Activated naive CD4-positive, alpha-beta T cell treated with anti-CD3 and anti-CD28 coated beads, Interleukin-2, amount 10 ng/mL, durations not matched to agents 7 days and 5 days (primary cell): ENCODE measurements at regions of chr2 and their contacts with region 1.

Region 1: DNA sequence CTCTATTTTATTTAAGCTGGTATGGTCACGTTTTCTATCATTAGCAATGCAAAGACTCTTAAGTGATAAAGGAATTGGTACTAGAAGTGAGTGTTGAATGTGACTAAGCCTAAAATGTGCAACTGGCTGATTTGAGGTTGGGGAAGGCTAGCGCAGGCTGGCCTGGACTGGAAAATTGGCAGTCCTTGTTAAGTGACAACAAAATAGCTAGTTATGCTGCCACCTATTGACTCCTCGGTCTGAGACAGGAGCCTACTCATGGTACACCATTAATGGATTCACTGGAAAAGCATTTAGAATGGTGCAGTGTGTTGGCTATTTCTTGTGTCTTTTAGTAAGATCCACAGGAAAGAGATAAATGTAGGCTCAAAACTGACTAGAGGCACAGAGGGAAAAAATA is 5.7 kb upstream of the WIPF1 start:
- DNase-seq: peak; percentile 68
- H3K4me3 Mint-ChIP-seq: no peak overlapping the region
- H3K27ac Mint-ChIP-seq: peak overlapping the region; percentile 65
- H3K4me1 Mint-ChIP-seq: peaks cover 90% of the 10 kb centered on the region
- H3K27me3 Mint-ChIP-seq: no peaks in the 10 kb centered on the region

Region 2: GRCh38 chr2:174577967-174578589 is 25.2 kb before region 1 on chr2:
- CTCF ChIA-PET with region 1: interaction called, 64 read pairs
- DNase-seq: peak; percentile 74
- H3K4me3 Mint-ChIP-seq: no peak overlapping the region
- H3K27ac Mint-ChIP-seq: peak overlapping the region; percentile 24
- H3K4me1 Mint-ChIP-seq: peaks cover 71% of the 10 kb centered on the region
- H3K27me3 Mint-ChIP-seq: no peaks in the 10 kb centered on the region

Region 3: GRCh38 chr2:174615871-174616436 is 12.7 kb after region 1 on chr2:
- CTCF ChIA-PET with region 1: interaction called, 18 read pairs
- DNase-seq: no peak
- H3K4me3 Mint-ChIP-seq: no peak overlapping the region
- H3K27ac Mint-ChIP-seq: peak overlapping the region; percentile 87
- H3K4me1 Mint-ChIP-seq: peaks cover 93% of the 10 kb centered on the region
- H3K27me3 Mint-ChIP-seq: no peaks in the 10 kb centered on the region

Region 4: GRCh38 chr2:174682578-174683391 is 79.5 kb after region 1 on chr2:
- CTCF ChIA-PET with region 1: interaction called, 272 read pairs
- DNase-seq: peak; percentile 75
- H3K4me3 Mint-ChIP-seq: peak overlapping the region; percentile 89
- H3K27ac Mint-ChIP-seq: peak overlapping the region; percentile 88
- H3K4me1 Mint-ChIP-seq: peaks cover 54% of the 10 kb centered on the region
- H3K27me3 Mint-ChIP-seq: peaks cover 4% of the 10 kb centered on the region